Activated CD8-positive, alpha-beta T cell treated with anti-CD3 and anti-CD28 coated beads, Interleukin-2, amount 10 ng/mL, durations not matched to agents 7 days and 5 days (primary cell): ENCODE measurements at regions of chr1 and their contacts with region 1.

Region 1: DNA sequence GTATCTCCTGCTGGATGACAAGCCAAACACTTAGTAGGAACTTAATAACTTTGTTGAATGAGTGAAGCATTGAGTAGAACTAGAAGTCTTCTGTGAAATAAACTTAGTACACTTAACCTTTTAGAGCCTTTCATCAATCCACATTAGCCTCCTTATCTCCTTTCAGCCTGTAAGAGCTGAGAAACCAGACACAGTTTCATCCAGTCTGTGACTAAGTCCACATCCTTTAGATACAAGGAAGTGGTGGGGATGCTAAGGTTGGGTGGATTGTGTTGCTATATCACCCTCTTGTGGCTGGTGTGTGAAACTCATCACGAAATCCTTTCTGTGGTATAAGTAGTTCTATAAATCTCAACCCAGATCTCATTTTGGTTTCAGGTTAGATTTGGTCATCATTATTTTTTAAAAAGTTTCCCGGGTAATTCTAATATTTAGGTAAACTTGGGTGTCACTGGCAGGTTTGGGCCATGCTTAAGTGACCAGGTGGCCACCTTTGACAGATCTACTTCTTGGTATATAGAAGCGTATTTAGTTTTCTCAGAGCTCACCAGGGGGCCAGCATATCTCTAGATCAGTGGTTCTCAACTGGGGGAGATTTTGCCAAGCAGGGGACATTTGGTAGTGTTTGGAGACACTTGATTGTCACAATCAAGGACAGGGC is 27.8 kb upstream of the CD84 start:
- DNase-seq: peak; percentile 81
- ATAC-seq: peak; percentile 98
- H3K4me3 Mint-ChIP-seq: no peak overlapping the region
- H3K27ac Mint-ChIP-seq: peak overlapping the region; percentile 80
- H3K4me1 Mint-ChIP-seq: peaks cover 52% of the 10 kb centered on the region
- H3K27me3 Mint-ChIP-seq: no peaks in the 10 kb centered on the region

Region 2: DNA sequence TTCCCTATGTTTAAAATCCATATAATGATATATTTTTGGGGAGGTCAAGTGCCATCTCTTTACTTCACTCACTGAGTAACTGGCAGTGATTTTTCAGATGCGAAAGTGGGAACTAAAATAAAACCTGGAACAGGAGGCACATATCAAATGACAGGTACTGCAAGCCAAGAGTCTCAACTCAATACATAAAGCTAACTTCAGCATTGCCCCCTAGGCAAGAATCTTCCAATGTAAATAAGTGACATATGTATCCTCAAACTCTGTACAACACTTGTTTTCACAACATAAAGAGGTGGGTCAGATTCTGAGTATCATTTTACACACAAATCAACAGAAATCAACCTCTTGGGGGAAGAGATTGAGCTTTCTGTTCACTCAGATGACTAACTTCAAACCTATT is 362.9 kb before region 1 on chr1:
- CTCF ChIA-PET with region 1: no interaction called
- POLR2A ChIA-PET with region 1: no interaction called
- DNase-seq: no peak
- ATAC-seq: no peak
- H3K4me3 Mint-ChIP-seq: no peak overlapping the region
- H3K27ac Mint-ChIP-seq: no peak overlapping the region
- H3K4me1 Mint-ChIP-seq: no peaks in the 10 kb centered on the region
- H3K27me3 Mint-ChIP-seq: no peaks in the 10 kb centered on the region

Region 3: GRCh38 chr1:160376525-160377131 is 230.5 kb before region 1 on chr1:
- CTCF ChIA-PET with region 1: interaction called, 25 read pairs
- POLR2A ChIA-PET with region 1: no interaction called
- DNase-seq: peak; percentile 55
- ATAC-seq: peak; percentile 73
- H3K4me3 Mint-ChIP-seq: no peak overlapping the region
- H3K27ac Mint-ChIP-seq: no peak overlapping the region
- H3K4me1 Mint-ChIP-seq: peaks cover 13% of the 10 kb centered on the region
- H3K27me3 Mint-ChIP-seq: peaks cover 8% of the 10 kb centered on the region

Region 4: GRCh38 chr1:160483505-160484185 is 123.5 kb before region 1 on chr1:
- CTCF ChIA-PET with region 1: interaction called, 10 read pairs
- POLR2A ChIA-PET with region 1: no interaction called
- DNase-seq: no peak
- ATAC-seq: no peak
- H3K4me3 Mint-ChIP-seq: no peak overlapping the region
- H3K27ac Mint-ChIP-seq: no peak overlapping the region
- H3K4me1 Mint-ChIP-seq: peaks cover 8% of the 10 kb centered on the region
- H3K27me3 Mint-ChIP-seq: no peaks in the 10 kb centered on the region

Region 5: DNA sequence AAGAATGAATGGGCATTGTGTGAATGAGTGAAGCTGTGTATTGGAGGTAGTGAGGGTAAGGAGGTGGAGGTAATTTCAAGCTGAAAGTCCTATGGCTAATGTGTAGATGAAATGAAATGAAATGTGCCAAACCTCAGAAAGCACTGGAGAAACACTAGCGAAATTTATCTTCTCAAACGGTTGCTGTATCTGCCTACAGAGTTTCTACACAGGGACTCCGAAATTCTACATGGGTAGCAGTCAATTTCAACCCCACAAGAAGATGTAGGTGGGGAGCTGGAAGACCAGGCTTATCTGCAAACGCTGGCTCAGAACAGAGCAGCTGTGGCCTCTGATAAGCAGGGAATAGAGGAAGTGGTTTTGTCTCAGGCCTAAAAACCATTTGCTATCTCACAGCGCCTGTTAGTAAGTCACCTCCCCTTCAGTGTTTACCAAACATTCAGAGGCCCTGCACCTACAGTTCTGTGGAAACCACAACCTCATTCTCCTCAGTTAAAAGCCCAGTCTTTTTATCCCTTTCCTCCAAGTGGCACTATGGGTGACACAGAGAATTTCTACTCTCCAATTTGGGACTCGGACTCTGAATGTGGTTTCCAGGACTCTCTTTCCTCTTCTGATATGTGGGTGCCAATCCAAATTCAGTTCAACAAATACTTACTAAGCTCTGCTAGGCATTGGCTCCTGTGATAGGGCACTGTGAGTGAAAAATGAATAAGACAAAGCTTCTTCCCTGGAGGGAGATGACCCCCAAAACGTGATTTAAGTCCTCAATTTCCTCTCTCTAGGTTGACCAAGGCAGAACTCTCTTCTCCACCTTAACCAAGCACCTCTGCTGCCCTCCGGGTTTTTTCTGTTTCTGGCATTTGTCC is 66.9 kb before region 1 on chr1:
- CTCF ChIA-PET with region 1: interaction called, 185 read pairs
- POLR2A ChIA-PET with region 1: interaction called, 11 read pairs
- DNase-seq: peak; percentile 76
- ATAC-seq: peak; percentile 95
- H3K4me3 Mint-ChIP-seq: peak overlapping the region; percentile 58
- H3K27ac Mint-ChIP-seq: peak overlapping the region; percentile 89
- H3K4me1 Mint-ChIP-seq: peaks cover 54% of the 10 kb centered on the region
- H3K27me3 Mint-ChIP-seq: no peaks in the 10 kb centered on the region

Region 6: DNA sequence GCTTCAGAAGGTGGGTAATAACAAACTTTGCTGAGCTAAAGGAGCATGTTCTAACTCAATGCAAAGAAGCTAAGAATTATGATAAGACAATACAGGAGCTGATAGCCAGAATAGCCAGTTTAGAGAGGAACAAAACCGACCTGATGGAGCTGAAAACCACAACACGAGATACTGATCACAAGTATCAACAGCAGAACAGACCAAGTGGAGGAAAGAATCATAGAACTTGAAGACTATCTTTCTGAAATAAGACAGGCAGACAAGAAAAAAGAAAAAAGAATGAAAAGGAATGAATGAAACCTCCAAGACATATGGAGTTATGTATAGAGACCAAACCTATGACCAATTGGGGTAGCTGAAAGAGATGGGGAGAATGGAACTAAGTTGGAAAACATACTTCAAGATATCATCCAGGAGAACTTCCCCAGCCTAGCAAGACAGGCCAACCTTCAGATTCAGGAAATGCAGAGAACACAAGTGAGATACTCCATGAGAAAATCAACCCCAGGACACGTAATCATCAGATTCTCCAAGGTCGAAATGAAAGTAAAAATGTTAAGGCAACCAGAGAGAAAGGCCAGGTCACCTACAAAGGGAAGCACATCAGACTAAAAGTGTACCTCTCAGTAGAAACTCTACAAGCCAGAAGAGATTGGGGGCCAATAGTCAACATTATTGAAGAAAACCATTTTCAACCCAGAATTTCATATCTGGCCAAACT is 48.3 kb before region 1 on chr1:
- CTCF ChIA-PET with region 1: interaction called, 185 read pairs
- POLR2A ChIA-PET with region 1: no interaction called
- DNase-seq: no peak
- ATAC-seq: peak; percentile 27
- H3K4me3 Mint-ChIP-seq: peak overlapping the region; percentile 51
- H3K27ac Mint-ChIP-seq: peak overlapping the region; percentile 53
- H3K4me1 Mint-ChIP-seq: peaks cover 42% of the 10 kb centered on the region
- H3K27me3 Mint-ChIP-seq: no peaks in the 10 kb centered on the region

Region 7: DNA sequence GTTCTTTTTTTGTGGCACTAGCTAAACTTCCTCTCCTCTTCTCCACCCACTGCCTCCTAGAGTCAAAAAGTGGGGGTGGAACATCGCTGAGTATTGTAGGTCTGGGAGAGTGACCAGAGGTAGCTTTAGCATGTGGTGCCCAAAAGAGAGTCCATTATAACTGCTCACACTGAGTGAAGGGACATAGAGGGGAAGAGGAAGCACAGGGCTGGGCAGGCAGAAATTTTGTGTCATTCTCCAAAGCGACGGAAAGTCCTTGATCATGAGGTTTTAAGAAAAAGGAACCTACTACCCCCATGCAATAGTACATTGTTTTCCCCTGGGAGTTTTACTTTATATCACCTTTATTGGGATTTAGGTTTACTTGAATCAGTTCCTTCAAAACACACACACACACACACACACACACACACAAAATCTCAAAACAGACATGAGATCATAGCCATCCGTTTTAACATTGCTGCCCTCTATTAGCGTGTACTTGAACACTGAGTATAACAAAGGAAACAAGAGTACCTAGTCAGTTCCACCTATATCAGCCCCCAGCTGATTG is 32.0 kb before region 1 on chr1:
- CTCF ChIA-PET with region 1: interaction called, 65 read pairs
- POLR2A ChIA-PET with region 1: no interaction called
- DNase-seq: no peak
- ATAC-seq: peak; percentile 14
- H3K4me3 Mint-ChIP-seq: peak overlapping the region; percentile 28
- H3K27ac Mint-ChIP-seq: peak overlapping the region; percentile 87
- H3K4me1 Mint-ChIP-seq: peaks cover 75% of the 10 kb centered on the region
- H3K27me3 Mint-ChIP-seq: no peaks in the 10 kb centered on the region